Activated T-helper 2 cell treated with anti-CD3 and anti-CD28 coated beads, Interferon-gamma antibody, Interleukin-2, Interleukin-4, amounts not matched to agents 10 μg/mL and 5 μg/mL and 100 μg/mL, durations not matched to agents 14 hours and 24 hours and 36 hours (primary cell): ENCODE measurements at regions of chr19 and their contacts with region 1.

Region 1: GRCh38 chr19:48713864-48714758 is 5.4 kb downstream of the MAMSTR start:
- DNase-seq: peak; percentile 99
- H3K4me3 Mint-ChIP-seq: peak overlapping the region; percentile 77
- H3K27ac Mint-ChIP-seq: peak overlapping the region; percentile 68
- H3K4me1 Mint-ChIP-seq: peaks cover 6% of the 10 kb centered on the region
- H3K27me3 Mint-ChIP-seq: no peaks in the 10 kb centered on the region

Region 2: GRCh38 chr19:48137411-48137810 is 576.7 kb before region 1 on chr19:
- intact Hi-C with region 1: no loop called
- DNase-seq: no peak
- H3K4me3 Mint-ChIP-seq: no peak overlapping the region
- H3K27ac Mint-ChIP-seq: no peak overlapping the region
- H3K4me1 Mint-ChIP-seq: no peaks in the 10 kb centered on the region
- H3K27me3 Mint-ChIP-seq: no peaks in the 10 kb centered on the region

Region 3: DNA sequence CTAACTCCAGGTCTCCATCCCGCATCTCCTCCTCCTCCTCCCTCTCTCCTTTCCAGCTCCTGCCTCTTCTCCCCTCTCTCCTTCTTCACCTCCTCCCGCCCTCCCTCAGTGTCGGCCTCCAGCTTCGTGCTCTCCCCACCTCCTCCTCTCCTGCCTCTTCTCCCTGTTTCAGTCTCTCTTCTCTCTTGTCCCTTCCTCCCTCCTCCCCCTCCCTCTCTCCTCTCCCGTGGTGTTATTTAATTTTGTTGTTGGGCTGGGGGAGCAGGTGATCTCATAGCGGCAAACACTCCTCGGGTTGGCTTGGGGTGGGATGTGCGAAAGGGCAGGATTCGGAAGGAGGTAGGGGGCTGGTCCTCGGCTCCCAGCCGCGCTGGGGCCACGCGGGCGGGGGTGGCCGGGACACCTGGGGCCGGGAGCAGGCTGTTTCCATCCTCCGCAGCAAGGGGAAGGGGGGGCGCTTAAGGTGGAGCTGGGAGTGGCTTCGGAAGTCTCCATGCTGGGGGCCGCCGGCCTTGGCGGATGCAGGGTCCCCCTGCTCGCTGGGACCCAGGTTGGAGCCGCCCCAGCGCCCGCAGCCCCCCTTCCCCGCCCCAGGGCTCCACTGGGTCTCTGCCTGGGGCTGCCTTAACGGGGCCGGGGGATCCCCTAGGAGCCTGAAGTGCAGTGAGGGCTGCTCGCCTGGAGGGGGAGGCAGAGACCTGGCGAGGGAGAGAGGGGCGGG is 68.0 kb before region 1 on chr19 and contains the start of gene CA11:
- intact Hi-C with region 1: no loop called
- DNase-seq: peak; percentile 88
- H3K4me3 Mint-ChIP-seq: peak within 1 kb of the TSS; percentile 75
- H3K27ac Mint-ChIP-seq: peak within 1 kb of the TSS; percentile 81
- H3K4me1 Mint-ChIP-seq: peaks cover 31% of the 10 kb centered on the region
- H3K27me3 Mint-ChIP-seq: peaks cover 4% of the 10 kb centered on the region
- total RNA-seq, gene CA11: 5.4 and 6.5 TPM in 2 replicates

Region 4: DNA sequence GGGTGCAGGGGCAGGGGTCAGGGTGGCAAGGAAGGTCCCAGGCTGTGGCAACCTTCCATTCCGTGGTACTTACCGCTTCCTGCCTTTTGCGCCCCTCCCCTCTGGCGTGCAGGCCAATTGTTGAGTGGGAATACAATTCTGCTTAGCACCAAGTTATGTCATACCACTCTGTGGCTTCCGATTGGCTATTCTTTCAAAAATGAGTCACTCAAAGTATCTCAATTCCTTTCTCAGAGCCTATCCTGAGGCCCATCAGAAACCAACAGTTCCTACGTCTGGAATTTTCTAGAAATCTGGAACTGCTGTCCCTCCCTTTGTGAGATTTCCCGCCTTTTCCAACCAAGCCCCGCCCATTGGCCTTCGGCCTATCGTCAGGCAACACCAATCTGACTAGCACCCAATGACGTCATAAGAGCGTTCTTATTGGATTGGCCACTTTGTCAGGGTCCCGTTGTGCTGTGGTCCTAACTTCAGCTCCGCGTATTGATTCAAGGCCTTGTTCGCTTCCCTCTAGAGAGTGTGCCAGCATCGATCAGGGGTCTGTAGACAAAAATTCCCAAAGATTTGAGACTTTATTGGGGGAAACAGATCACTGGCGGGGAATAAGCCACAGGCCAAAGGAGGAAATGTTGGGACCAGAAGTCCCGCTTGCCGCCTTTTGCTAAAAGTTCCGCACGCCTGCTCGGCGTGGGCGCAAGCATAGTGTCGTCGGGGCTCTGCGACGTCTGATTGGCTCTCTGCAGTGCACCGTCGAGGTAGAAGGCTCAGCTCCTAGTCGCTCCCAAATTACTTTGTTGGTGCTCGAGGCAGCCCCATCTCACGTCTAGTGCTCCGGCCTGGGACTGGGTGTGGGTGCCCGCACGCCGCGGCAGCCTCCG is 53.0 kb before region 1 on chr19:
- intact Hi-C with region 1: loop called (anchors 2 kb)
- DNase-seq: peak; percentile 80
- H3K4me3 Mint-ChIP-seq: peak overlapping the region; percentile 40
- H3K27ac Mint-ChIP-seq: peak overlapping the region; percentile 91
- H3K4me1 Mint-ChIP-seq: peaks cover 6% of the 10 kb centered on the region
- H3K27me3 Mint-ChIP-seq: peaks cover 3% of the 10 kb centered on the region

Region 5: GRCh38 chr19:48696353-48697010 is 17.6 kb before region 1 on chr19:
- intact Hi-C with region 1: no loop called
- DNase-seq: no peak
- H3K4me3 Mint-ChIP-seq: no peak overlapping the region
- H3K27ac Mint-ChIP-seq: no peak overlapping the region
- H3K4me1 Mint-ChIP-seq: no peaks in the 10 kb centered on the region
- H3K27me3 Mint-ChIP-seq: peaks cover 13% of the 10 kb centered on the region

Region 6: DNA sequence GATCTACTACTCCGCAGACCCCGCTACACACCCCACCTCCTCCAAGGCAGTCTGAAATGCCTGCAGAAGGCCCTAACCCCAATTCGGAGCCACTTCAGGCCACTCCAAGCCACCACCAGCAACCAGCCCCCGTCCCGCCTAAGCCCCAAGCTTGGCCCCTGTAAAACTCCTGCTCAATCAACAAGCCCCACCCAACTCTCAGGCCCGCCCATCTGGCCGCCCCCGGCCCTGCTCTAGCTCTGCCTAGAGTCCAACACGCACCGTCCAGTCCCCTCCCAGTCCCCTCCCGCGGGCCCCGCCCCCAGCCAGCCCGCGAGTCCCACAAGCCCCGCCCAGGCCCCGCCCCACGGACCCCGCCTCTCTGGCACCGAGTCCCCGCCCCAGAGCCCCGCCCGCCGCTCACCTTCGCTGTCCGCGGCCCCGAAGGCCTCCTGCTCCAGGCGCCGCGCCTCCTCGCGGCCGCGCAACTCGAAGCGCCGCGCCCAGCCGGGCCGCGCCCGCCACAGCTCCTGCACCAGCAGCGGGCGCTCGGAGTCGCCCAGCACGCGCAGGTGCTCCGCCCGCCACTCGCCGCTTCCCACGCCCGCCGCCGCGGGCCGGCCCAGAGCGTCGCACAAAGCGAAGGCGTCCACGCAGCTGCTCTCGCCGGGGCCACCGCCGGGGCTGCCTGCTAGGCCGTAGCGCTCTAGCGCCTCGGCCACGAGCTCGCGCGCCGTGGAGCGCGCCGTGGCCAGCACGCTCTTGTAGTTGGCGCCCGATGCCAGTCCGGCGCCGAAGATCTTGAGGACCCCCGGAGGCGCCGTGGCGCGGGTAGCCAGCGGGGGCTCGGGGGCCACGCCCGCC is 24.7 kb after region 1 on chr19:
- intact Hi-C with region 1: loop called (anchors 1 kb)
- DNase-seq: peak; percentile 86
- H3K4me3 Mint-ChIP-seq: peak overlapping the region; percentile 35
- H3K27ac Mint-ChIP-seq: peak overlapping the region; percentile 50
- H3K4me1 Mint-ChIP-seq: peaks cover 8% of the 10 kb centered on the region
- H3K27me3 Mint-ChIP-seq: peaks cover 3% of the 10 kb centered on the region

Region 7: GRCh38 chr19:48770260-48770659 is 56.1 kb after region 1 on chr19:
- intact Hi-C with region 1: no loop called
- DNase-seq: no peak
- H3K4me3 Mint-ChIP-seq: no peak overlapping the region
- H3K27ac Mint-ChIP-seq: no peak overlapping the region
- H3K4me1 Mint-ChIP-seq: no peaks in the 10 kb centered on the region
- H3K27me3 Mint-ChIP-seq: peaks cover 15% of the 10 kb centered on the region